A673 (cell line): ENCODE measurements at regions of chr19 and their contacts with region 1.

Region 1: GRCh38 chr19:47863514-47863936 is 4.5 kb downstream of the TPRX2 start:
- DNase-seq: peak; percentile 86
- H3K4me3 ChIP-seq: no peak overlapping the region
- H3K27ac ChIP-seq: no peak overlapping the region
- H3K4me1 ChIP-seq: no peaks in the 10 kb centered on the region
- H3K27me3 ChIP-seq: no peaks in the 10 kb centered on the region
- CTCF ChIP-seq: peak; percentile 99

Region 2: GRCh38 chr19:47813304-47814004 is 50.1 kb before region 1 on chr19:
- CTCF ChIA-PET with region 1: no interaction called
- POLR2A ChIA-PET with region 1: no interaction called
- intact Hi-C with region 1: loop called (anchors 1 kb)
- DNase-seq: peak; percentile 82
- H3K4me3 ChIP-seq: no peak overlapping the region
- H3K27ac ChIP-seq: no peak overlapping the region
- H3K4me1 ChIP-seq: no peaks in the 10 kb centered on the region
- H3K27me3 ChIP-seq: no peaks in the 10 kb centered on the region
- CTCF ChIP-seq: peak; percentile 70